Lower leg skin (tissue), 4 donors: ENCODE measurements at regions of chr1 and their contacts with region 1.

Region 1: GRCh38 chr1:90821793-90822359 is 104.8 kb upstream of the BARHL2 start:
- DNase-seq: no peak
- H3K4me3 ChIP-seq: no peak overlapping the region
- CTCF ChIP-seq: no peak
- POLR2A ChIP-seq: no peak

Region 2: GRCh38 chr1:90605070-90605469 is 216.8 kb before region 1 on chr1:
- intact Hi-C with region 1: no loop called
- DNase-seq: no peak
- H3K4me3 ChIP-seq: no peak overlapping the region
- CTCF ChIP-seq: no peak
- POLR2A ChIP-seq: no peak

Region 3: GRCh38 chr1:92004129-92004528 is 1182.3 kb after region 1 on chr1:
- intact Hi-C with region 1: loop called (anchors 10 kb)
- DNase-seq: no peak
- H3K4me3 ChIP-seq: no peak overlapping the region
- CTCF ChIP-seq: no peak
- POLR2A ChIP-seq: no peak